Pancreas (tissue), 10 donors: ENCODE measurements at regions of chr19 and their contacts with region 1.

Region 1: GRCh38 chr19:46661020-46661731 is at the start of gene DACT3:
- DNase-seq: peak; percentile 100
- ATAC-seq: peak; percentile 92 to 97 (median 92)
- H3K4me3 ChIP-seq: peak within 1 kb of the TSS; percentile 34 to 67 (median 46)
- H3K27ac ChIP-seq: peak within 1 kb of the TSS in 2 of 4 donors; percentile 56 to 59
- H3K4me1 ChIP-seq: peaks cover 5 to 13% (median 10%) of the 10 kb centered on the region in 3 donors
- H3K27me3 ChIP-seq: peaks cover 0 to 8% (median 0%) of the 10 kb centered on the region in 4 donors
- CTCF ChIP-seq: no peak
- total RNA-seq, gene DACT3: 0.24 to 1.7 (median 0.48) TPM

Region 2: DNA sequence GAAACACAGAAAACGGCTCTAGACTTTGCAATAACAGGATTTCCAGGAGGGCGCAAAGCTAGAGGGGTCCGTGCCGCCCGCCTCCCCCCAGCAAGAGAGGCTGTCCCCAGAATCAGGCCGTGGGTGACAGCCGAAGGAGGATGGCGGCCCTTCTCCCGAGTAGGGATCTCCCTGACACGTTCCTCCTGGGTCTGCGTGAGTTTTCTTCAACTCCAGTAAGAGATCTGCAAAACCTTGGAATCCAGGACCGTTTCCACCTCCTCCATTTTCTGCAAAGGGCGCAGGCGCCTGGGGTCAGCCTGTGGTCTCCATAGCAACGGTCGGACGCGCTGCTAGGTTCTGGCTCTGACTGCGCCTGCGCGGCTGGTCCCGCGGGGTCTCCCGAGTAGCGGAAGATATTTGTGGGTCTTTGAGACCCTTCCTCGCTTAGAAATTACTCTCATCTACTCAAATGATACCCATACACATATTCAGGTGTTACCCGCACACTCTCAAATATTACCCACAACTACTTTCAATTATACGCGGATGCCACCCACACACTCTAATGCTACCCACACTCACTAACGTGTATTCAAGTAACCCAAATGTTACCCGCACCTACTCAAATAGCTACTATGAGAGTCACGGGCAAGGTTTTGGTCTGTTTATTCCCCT is 234.5 kb before region 1 on chr19:
- intact Hi-C with region 1: no loop called
- DNase-seq: peak; percentile 77 to 96 (median 86)
- ATAC-seq: peak; percentile 92 to 95 (median 92)
- H3K4me3 ChIP-seq: peak overlapping the region; percentile 41 to 70 (median 61)
- H3K27ac ChIP-seq: peak overlapping the region in 3 of 4 donors; percentile 51 to 82 (median 80)
- H3K4me1 ChIP-seq: peaks cover 0 to 7% (median 3%) of the 10 kb centered on the region in 3 donors
- H3K27me3 ChIP-seq: no peaks in the 10 kb centered on the region
- CTCF ChIP-seq: no peak

Region 3: DNA sequence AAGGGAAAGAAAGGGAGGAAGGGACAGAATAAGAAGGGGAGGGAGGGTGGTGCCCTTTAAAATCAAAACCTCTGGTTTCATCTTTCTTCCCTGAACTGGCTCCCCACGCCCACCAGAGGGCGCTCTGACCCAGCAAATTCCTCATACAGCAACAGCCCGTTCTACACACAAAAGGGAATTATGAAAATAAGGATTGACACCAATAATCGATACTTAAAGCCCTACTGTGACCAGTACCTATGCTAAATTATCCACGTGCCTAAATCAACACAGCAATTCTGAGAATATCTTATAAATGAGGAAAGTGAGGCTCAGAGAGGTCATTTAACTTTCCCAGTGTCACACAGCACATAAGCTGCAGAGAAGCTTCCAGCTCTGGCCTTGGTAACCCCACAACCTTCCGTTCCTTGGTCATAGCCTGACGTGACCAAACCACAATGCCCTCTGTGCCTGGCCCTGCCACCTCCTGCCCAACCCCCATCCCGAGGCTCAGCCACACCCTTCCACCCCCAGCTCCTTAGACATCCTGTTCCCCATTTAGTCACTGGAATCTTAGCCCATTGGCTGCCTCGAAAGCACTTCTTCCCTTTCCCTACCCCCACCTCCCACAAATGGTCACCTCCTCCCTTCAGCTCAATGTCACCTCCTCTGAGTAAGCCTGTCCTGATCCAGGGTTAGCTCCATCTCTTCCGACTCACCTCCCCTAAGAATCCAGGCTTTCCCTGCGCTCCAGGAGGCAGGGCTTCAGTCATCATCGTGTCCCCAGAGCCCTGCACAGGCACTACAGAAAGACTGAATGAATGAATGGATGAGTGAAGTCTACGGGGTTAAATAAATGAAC is 131.3 kb before region 1 on chr19:
- intact Hi-C with region 1: loop called in 1 of 3 experiments (anchors 10 kb)
- DNase-seq: peak in 5 of 6 donors; percentile 37 to 89 (median 72)
- ATAC-seq: peak; percentile 70 to 88 (median 84)
- H3K4me3 ChIP-seq: no peak overlapping the region
- H3K27ac ChIP-seq: no peak overlapping the region
- H3K4me1 ChIP-seq: no peaks in the 10 kb centered on the region
- H3K27me3 ChIP-seq: no peaks in the 10 kb centered on the region
- CTCF ChIP-seq: peak; percentile 87 to 94 (median 90)

Region 4: DNA sequence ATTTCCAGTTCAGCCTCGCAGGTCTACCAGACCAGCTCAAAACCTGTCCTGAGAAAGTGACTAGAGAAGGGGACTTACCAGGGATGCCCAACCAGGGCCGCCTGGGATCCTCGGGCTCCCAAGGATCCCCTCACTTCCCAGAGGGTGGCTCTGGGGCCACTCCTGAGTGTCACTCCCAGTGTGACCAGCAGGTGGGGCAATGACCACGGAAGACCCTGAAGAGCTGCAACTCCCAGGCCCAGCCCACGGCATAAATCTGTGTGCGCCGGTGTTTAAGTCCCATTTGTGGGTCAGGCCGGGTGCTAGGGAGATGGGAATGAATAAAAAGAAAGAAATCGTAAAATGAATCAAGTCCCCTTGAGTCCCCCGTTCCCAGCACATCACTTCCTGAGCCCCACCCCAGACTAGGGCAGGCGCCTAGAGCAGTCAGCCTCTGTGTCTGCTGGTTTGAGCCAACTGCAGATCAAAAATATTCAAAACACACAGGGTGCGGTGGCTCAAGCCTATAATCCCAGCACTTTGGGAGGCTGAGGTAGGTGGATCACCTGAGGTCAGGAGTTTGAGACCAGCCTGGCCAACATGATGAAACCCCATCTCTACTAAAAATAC is 47.0 kb before region 1 on chr19:
- intact Hi-C with region 1: loop called in 2 of 3 experiments (anchors 5 kb)
- DNase-seq: peak; percentile 74 to 94 (median 86)
- ATAC-seq: peak; percentile 44 to 78 (median 72)
- H3K4me3 ChIP-seq: no peak overlapping the region
- H3K27ac ChIP-seq: no peak overlapping the region
- H3K4me1 ChIP-seq: peaks cover 13 to 24% (median 15%) of the 10 kb centered on the region in 3 donors
- H3K27me3 ChIP-seq: no peaks in the 10 kb centered on the region
- CTCF ChIP-seq: peak; percentile 86 to 90 (median 88)